Activated naive CD4-positive, alpha-beta T cell treated with anti-CD3 and anti-CD28 coated beads for 36 hours (primary cell): ENCODE measurements at regions of chr21 and their contacts with region 1.

Region 1: GRCh38 chr21:39388038-39388810 is 39.3 kb upstream of the HMGN1 start:
- DNase-seq: peak; percentile 93
- H3K4me3 Mint-ChIP-seq: peak overlapping the region; percentile 86
- H3K27ac Mint-ChIP-seq: peak overlapping the region; percentile 91
- H3K4me1 Mint-ChIP-seq: peaks cover 32% of the 10 kb centered on the region
- H3K27me3 Mint-ChIP-seq: no peaks in the 10 kb centered on the region

Region 2: GRCh38 chr21:38505654-38506515 is 882.3 kb before region 1 on chr21:
- CTCF ChIA-PET with region 1: interaction called, 3 read pairs
- intact Hi-C with region 1: loop called (anchors 5 kb)
- DNase-seq: peak; percentile 49
- H3K4me3 Mint-ChIP-seq: no peak overlapping the region
- H3K27ac Mint-ChIP-seq: no peak overlapping the region
- H3K4me1 Mint-ChIP-seq: no peaks in the 10 kb centered on the region
- H3K27me3 Mint-ChIP-seq: peaks cover 31% of the 10 kb centered on the region

Region 3: DNA sequence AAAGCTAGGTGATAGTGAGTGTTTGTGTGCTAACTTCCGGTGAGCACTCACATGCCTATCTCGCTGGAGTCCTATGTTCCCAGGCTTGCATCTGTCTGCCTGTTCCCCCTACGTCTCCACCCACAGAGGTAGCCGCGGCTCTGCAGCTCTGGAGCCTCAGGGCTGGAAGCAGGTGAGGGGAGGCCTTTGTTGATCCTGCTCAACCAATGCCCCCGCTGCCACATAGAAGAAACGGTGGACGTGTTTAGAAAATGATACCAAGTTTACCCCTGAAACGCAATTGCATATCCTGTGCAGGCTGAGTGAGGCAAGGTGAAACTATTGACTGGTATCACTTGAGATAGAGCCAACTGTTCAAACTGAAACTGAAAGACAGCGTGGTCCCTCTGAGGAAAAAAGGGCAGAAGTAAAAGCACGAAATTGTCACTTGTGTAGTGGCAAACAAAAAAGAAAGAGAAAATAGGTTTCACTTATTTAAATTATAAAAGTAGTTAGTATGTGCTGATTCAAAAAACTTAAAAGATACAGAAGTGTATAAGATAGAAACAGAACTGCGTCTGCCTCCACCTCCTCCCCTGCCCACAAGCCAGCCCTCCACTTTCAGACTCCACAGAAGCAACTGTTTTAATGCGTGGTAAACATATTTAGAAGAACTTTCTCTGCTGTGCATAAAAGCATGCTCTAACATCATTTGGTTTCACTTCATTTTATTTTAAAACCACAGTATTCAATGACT is 621.1 kb before region 1 on chr21:
- CTCF ChIA-PET with region 1: no interaction called
- intact Hi-C with region 1: loop called (anchors 10 kb)
- DNase-seq: peak; percentile 83
- H3K4me3 Mint-ChIP-seq: peak overlapping the region; percentile 51
- H3K27ac Mint-ChIP-seq: peak overlapping the region; percentile 82
- H3K4me1 Mint-ChIP-seq: peaks cover 42% of the 10 kb centered on the region
- H3K27me3 Mint-ChIP-seq: no peaks in the 10 kb centered on the region

Region 4: GRCh38 chr21:39004634-39005501 is 383.4 kb before region 1 on chr21:
- CTCF ChIA-PET with region 1: no interaction called
- intact Hi-C with region 1: loop called (anchors 10 kb)
- DNase-seq: peak; percentile 21
- H3K4me3 Mint-ChIP-seq: no peak overlapping the region
- H3K27ac Mint-ChIP-seq: no peak overlapping the region
- H3K4me1 Mint-ChIP-seq: peaks cover 15% of the 10 kb centered on the region
- H3K27me3 Mint-ChIP-seq: no peaks in the 10 kb centered on the region

Region 5: GRCh38 chr21:39137248-39138178 is 250.7 kb before region 1 on chr21:
- CTCF ChIA-PET with region 1: no interaction called
- intact Hi-C with region 1: loop called (anchors 5 kb)
- DNase-seq: no peak
- H3K4me3 Mint-ChIP-seq: no peak overlapping the region
- H3K27ac Mint-ChIP-seq: no peak overlapping the region
- H3K4me1 Mint-ChIP-seq: no peaks in the 10 kb centered on the region
- H3K27me3 Mint-ChIP-seq: peaks cover 2% of the 10 kb centered on the region

Region 6: GRCh38 chr21:39313571-39314142 is 74.6 kb before region 1 on chr21 and contains the start of gene BRWD1:
- CTCF ChIA-PET with region 1: interaction called, 8 read pairs
- intact Hi-C with region 1: loop called (anchors 1 kb)
- DNase-seq: peak; percentile 75
- H3K4me3 Mint-ChIP-seq: peak within 1 kb of the TSS; percentile 93
- H3K27ac Mint-ChIP-seq: peak within 1 kb of the TSS; percentile 97
- H3K4me1 Mint-ChIP-seq: peaks cover 42% of the 10 kb centered on the region
- H3K27me3 Mint-ChIP-seq: no peaks in the 10 kb centered on the region
- total RNA-seq, gene BRWD1: 23.0 to 24.5 TPM

Region 7: GRCh38 chr21:39373644-39374043 is 14.6 kb before region 1 on chr21:
- CTCF ChIA-PET with region 1: interaction called, 5 read pairs
- intact Hi-C with region 1: loop called (anchors 1 kb)
- DNase-seq: peak; percentile 35
- H3K4me3 Mint-ChIP-seq: no peak overlapping the region
- H3K27ac Mint-ChIP-seq: no peak overlapping the region
- H3K4me1 Mint-ChIP-seq: no peaks in the 10 kb centered on the region
- H3K27me3 Mint-ChIP-seq: no peaks in the 10 kb centered on the region

Region 8: GRCh38 chr21:40270047-40270446 is 881.8 kb after region 1 on chr21:
- CTCF ChIA-PET with region 1: no interaction called
- intact Hi-C with region 1: no loop called
- DNase-seq: no peak
- H3K4me3 Mint-ChIP-seq: no peak overlapping the region
- H3K27ac Mint-ChIP-seq: no peak overlapping the region
- H3K4me1 Mint-ChIP-seq: no peaks in the 10 kb centered on the region
- H3K27me3 Mint-ChIP-seq: no peaks in the 10 kb centered on the region